GM12878 (cell line): ENCODE measurements at regions of chr3 and their contacts with region 1.

Region 1: GRCh38 chr3:48439820-48440589 is at the starts of genes CCDC51 and TMA7:
- DNase-seq: peak; percentile 93
- ATAC-seq: peak; percentile 96
- H3K4me3 ChIP-seq: peak within 1 kb of the TSS; percentile 89
- H3K27ac ChIP-seq: peak within 1 kb of the TSS; percentile 86
- H3K4me1 ChIP-seq: peaks cover 19% of the 10 kb centered on the region
- H3K27me3 ChIP-seq: no peaks in the 10 kb centered on the region
- CTCF ChIP-seq: 0 out of 6 replicates have a peak, but pooled peaks of 1 of the 3 experiments have one; percentile 5
- EP300 ChIP-seq: no peak
- POLR2A ChIP-seq: peak; percentile 97
- RAD21 ChIP-seq: no peak
- polyA plus RNA-seq, gene CCDC51: 10.6 to 12.6 TPM
- polyA plus RNA-seq, gene TMA7: 1,729 to 1,760 TPM

Region 2: DNA sequence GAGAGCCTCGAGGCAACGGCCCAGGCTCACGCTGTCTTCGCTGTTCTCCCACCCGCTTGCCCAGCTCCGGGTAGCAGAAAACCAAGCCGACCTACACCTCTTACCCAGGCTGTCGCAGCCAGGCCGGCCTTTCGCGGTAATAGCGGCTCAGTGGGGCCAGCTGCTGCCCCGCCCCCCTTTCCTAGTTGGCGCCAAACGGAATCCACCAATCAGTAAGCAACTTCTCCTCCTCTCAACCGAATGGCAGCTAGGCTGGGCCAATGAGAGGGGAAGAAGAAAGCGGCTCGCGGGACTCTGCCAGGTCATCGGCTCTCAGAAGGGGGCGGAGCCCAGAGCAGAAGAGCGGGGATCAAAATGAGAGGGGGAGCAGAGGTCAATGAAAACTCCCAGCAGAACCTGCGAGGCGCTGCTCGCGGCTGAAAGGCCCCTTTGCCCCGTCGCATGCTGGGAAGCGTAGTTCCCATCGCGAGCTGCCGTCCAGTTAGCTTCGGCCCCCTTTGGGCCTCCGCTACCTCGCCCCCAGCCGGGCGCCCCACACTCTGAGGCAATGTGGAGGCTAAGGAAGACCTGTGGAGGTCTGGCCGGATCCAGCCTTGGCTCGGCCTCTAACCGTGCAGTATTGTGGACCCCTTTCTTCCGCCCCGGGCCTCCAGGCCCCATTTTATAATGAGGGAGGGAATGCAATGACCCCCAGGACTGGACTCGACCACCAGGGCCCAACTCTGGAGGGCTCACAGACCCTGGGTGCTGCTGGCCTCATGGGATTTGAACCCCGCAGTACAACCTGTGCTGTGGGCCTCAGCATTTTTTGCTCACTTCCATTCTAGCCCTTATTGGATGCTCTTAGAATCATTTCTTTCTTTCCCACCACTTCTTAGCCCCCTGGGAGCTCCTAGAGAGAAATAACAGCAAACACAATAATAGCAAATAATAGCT is 251.5 kb before region 1 on chr3 and contains the start of gene CDC25A:
- CTCF ChIA-PET with region 1: interaction called, 85 read pairs
- POLR2A ChIA-PET with region 1: interaction called, 6 read pairs
- RAD21 ChIA-PET with region 1: interaction called, 66 read pairs
- SMC1A ChIA-PET with region 1: interaction called, 31 read pairs
- in situ Hi-C with region 1: no loop called
- intact Hi-C with region 1: no loop called
- DNase-seq: peak; percentile 97
- ATAC-seq: peak; percentile 98
- H3K4me3 ChIP-seq: peak within 1 kb of the TSS; percentile 92
- H3K27ac ChIP-seq: peak within 1 kb of the TSS; percentile 74
- H3K4me1 ChIP-seq: peaks cover 12% of the 10 kb centered on the region; the same call in 1 of the 2 replicates
- H3K27me3 ChIP-seq: no peaks in the 10 kb centered on the region
- CTCF ChIP-seq: no peak
- EP300 ChIP-seq: no peak
- POLR2A ChIP-seq: peak; percentile 82
- RAD21 ChIP-seq: no peak
- polyA plus RNA-seq, gene CDC25A: 2.9 to 5.6 TPM

Region 3: GRCh38 chr3:48240711-48241491 is 199.1 kb before region 1 on chr3 and contains the start of gene ZNF589:
- CTCF ChIA-PET with region 1: interaction called, 267 read pairs
- POLR2A ChIA-PET with region 1: interaction called, 6 read pairs
- RAD21 ChIA-PET with region 1: interaction called, 22 read pairs
- SMC1A ChIA-PET with region 1: interaction called, 57 read pairs
- in situ Hi-C with region 1: no loop called
- intact Hi-C with region 1: no loop called
- DNase-seq: peak; percentile 87
- ATAC-seq: peak; percentile 98
- H3K4me3 ChIP-seq: peak within 1 kb of the TSS; percentile 96
- H3K27ac ChIP-seq: peak within 1 kb of the TSS; percentile 74
- H3K4me1 ChIP-seq: peaks cover 7% of the 10 kb centered on the region; the same call in 1 of the 2 replicates
- H3K27me3 ChIP-seq: no peaks in the 10 kb centered on the region
- CTCF ChIP-seq: peak in 2 of 3 experiments; percentile 39 to 59; a peak in 5 of 6 replicates
- EP300 ChIP-seq: no peak
- POLR2A ChIP-seq: peak; percentile 99
- RAD21 ChIP-seq: 0 out of 2 replicates have a peak, but pooled peaks have one; percentile 15
- polyA plus RNA-seq, gene ZNF589: 6.5 to 10.1 TPM

Region 4: GRCh38 chr3:48285132-48285531 is 154.9 kb before region 1 on chr3:
- CTCF ChIA-PET with region 1: interaction called, 71 read pairs
- POLR2A ChIA-PET with region 1: no interaction called
- RAD21 ChIA-PET with region 1: interaction called, 13 read pairs
- SMC1A ChIA-PET with region 1: interaction called, 12 read pairs
- in situ Hi-C with region 1: no loop called
- intact Hi-C with region 1: no loop called
- DNase-seq: no peak
- ATAC-seq: no peak
- H3K4me3 ChIP-seq: no peak overlapping the region
- H3K27ac ChIP-seq: no peak overlapping the region
- H3K4me1 ChIP-seq: no peaks in the 10 kb centered on the region
- H3K27me3 ChIP-seq: no peaks in the 10 kb centered on the region
- CTCF ChIP-seq: no peak
- EP300 ChIP-seq: no peak
- POLR2A ChIP-seq: no peak
- RAD21 ChIP-seq: no peak

Region 5: GRCh38 chr3:48400824-48401433 is 39.1 kb before region 1 on chr3:
- CTCF ChIA-PET with region 1: interaction called, 757 read pairs
- POLR2A ChIA-PET with region 1: interaction called, 11 read pairs
- RAD21 ChIA-PET with region 1: interaction called, 259 read pairs
- SMC1A ChIA-PET with region 1: interaction called, 287 read pairs
- in situ Hi-C with region 1: loop called (anchors 5 kb)
- intact Hi-C with region 1: loop called (anchors 1 kb)
- DNase-seq: peak; percentile 26
- ATAC-seq: peak; percentile 92
- H3K4me3 ChIP-seq: no peak overlapping the region
- H3K27ac ChIP-seq: no peak overlapping the region
- H3K4me1 ChIP-seq: no peaks in the 10 kb centered on the region
- H3K27me3 ChIP-seq: no peaks in the 10 kb centered on the region
- CTCF ChIP-seq: peak; percentile 71 to 90 (median 80); a peak in 5 of 6 replicates
- EP300 ChIP-seq: no peak
- POLR2A ChIP-seq: no peak
- RAD21 ChIP-seq: peak; percentile 93

Region 6: GRCh38 chr3:48456456-48456855 is 16.5 kb after region 1 on chr3:
- CTCF ChIA-PET with region 1: interaction called, 54 read pairs
- POLR2A ChIA-PET with region 1: interaction called, 8 read pairs
- RAD21 ChIA-PET with region 1: interaction called, 18 read pairs
- SMC1A ChIA-PET with region 1: interaction called, 7 read pairs
- in situ Hi-C with region 1: no loop called
- intact Hi-C with region 1: no loop called
- DNase-seq: no peak
- ATAC-seq: no peak
- H3K4me3 ChIP-seq: no peak overlapping the region
- H3K27ac ChIP-seq: no peak overlapping the region
- H3K4me1 ChIP-seq: no peaks in the 10 kb centered on the region
- H3K27me3 ChIP-seq: no peaks in the 10 kb centered on the region
- CTCF ChIP-seq: no peak
- EP300 ChIP-seq: no peak
- POLR2A ChIP-seq: no peak
- RAD21 ChIP-seq: no peak

Region 7: DNA sequence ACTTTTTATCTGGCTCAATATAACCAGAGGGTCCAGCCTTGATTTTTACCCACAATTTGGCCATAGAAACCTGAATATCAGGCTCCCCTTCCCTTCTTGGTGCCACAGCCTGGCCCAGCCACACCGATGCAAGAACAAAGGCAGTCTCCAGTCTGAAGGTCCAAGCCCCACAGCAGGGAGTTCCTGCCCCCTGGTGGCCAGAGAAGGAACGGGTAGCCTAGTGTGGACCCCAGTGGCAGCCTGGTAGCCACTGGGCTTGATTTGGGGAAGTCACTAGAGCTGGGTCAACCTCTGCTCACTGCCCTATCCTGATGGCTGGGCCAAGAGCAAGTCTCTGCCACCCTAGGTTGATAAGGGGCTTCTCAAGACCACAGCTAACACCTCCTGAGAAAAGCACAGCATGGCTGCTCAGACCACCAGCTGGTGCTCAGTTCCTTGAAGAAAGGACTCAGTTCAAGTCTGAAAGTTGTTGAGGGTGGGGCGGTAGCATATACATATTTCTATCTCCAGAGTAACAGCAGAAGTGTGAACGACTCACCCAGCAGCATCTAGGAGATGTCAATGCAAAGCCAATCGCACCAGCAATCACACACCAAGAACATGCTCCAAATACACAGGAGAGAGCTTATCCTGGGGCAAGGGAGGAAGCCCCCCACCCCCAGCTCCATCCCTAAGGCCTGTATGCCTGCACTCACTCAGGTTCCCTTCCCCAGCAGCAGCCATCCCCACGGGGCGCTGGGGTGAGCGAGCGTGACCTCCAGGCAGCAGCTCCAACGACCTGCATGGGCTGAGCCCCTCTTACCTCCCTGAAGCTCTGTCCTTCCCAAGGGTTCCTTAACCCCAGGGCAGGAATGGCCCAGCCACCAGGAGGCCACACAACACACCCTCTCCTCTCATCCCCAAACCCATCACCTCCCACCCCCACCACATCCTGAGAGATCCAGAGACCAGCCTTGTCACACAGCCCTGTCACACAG is 109.0 kb after region 1 on chr3:
- CTCF ChIA-PET with region 1: interaction called, 239 read pairs
- POLR2A ChIA-PET with region 1: interaction called, 8 read pairs
- RAD21 ChIA-PET with region 1: interaction called, 23 read pairs
- SMC1A ChIA-PET with region 1: interaction called, 28 read pairs
- in situ Hi-C with region 1: no loop called
- intact Hi-C with region 1: no loop called
- DNase-seq: no peak
- ATAC-seq: peak; percentile 100
- H3K4me3 ChIP-seq: no peak overlapping the region
- H3K27ac ChIP-seq: no peak overlapping the region
- H3K4me1 ChIP-seq: no peaks in the 10 kb centered on the region; the same call in 1 of the 2 replicates
- H3K27me3 ChIP-seq: no peaks in the 10 kb centered on the region
- CTCF ChIP-seq: peak; percentile 90 to 95 (median 95)
- EP300 ChIP-seq: no peak
- POLR2A ChIP-seq: no peak
- RAD21 ChIP-seq: peak; percentile 93

Region 8: GRCh38 chr3:48788544-48789162 is 348.6 kb after region 1 on chr3:
- CTCF ChIA-PET with region 1: no interaction called
- POLR2A ChIA-PET with region 1: no interaction called
- RAD21 ChIA-PET with region 1: no interaction called
- SMC1A ChIA-PET with region 1: no interaction called
- in situ Hi-C with region 1: no loop called
- intact Hi-C with region 1: no loop called
- DNase-seq: no peak
- ATAC-seq: no peak
- H3K4me3 ChIP-seq: no peak overlapping the region
- H3K27ac ChIP-seq: no peak overlapping the region
- H3K4me1 ChIP-seq: no peaks in the 10 kb centered on the region
- H3K27me3 ChIP-seq: no peaks in the 10 kb centered on the region
- CTCF ChIP-seq: no peak
- EP300 ChIP-seq: no peak
- POLR2A ChIP-seq: no peak
- RAD21 ChIP-seq: no peak